Colonic mucosa (tissue), 4 donors: ENCODE measurements at regions of chr5 and their contacts with region 1.

Region 1: DNA sequence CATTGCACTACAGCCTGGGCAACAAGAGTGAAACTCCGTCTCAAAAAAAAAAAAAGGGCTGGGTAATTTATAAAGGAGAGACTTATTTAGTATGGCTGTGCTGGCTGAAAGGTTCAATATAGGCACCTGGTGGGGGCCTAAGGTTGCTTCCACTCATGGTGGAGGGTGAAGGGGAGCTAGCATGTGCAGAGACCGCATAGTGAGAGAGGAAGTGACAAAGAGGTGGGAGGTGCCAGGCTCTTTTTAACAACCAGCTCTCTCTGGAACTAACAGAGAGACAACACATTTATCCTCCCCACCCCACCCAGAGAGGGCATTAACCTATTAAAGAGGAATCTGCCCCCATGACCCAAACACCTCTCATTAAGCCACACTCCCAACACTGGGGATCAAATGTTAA is 28.9 kb upstream of the SERINC5 start:
- DNase-seq: no peak
- H3K4me3 ChIP-seq: no peak overlapping the region
- H3K27ac ChIP-seq: no peak overlapping the region
- H3K4me1 ChIP-seq: no peaks in the 10 kb centered on the region
- H3K27me3 ChIP-seq: no peaks in the 10 kb centered on the region
- CTCF ChIP-seq: no peak

Region 2: DNA sequence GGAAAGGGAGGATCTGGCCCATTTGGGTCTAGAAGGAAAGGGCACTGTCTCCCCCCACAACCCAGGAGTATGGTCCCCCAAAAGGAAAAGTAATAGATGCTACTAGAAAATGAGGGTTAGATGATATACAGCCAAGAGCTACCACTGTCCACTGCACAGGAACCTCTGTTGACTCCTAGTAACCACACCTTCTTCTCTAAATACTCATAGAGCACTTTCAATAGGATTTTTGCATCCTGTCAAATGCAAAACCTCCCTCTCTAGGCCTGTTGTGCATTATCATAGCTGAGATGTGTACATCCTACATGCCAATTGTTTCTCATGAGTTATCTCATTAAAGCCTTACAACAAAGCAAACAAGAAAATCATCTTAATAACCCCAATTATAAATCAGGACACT is 182.7 kb before region 1 on chr5:
- intact Hi-C with region 1: loop called (anchors 5 kb)
- DNase-seq: no peak
- H3K4me3 ChIP-seq: no peak overlapping the region
- H3K27ac ChIP-seq: no peak overlapping the region
- H3K4me1 ChIP-seq: no peaks in the 10 kb centered on the region
- H3K27me3 ChIP-seq: no peaks in the 10 kb centered on the region
- CTCF ChIP-seq: no peak